Naive thymus-derived CD4-positive, alpha-beta T cell (primary cell): ENCODE measurements at regions of chr6 and their contacts with region 1.

Region 1: DNA sequence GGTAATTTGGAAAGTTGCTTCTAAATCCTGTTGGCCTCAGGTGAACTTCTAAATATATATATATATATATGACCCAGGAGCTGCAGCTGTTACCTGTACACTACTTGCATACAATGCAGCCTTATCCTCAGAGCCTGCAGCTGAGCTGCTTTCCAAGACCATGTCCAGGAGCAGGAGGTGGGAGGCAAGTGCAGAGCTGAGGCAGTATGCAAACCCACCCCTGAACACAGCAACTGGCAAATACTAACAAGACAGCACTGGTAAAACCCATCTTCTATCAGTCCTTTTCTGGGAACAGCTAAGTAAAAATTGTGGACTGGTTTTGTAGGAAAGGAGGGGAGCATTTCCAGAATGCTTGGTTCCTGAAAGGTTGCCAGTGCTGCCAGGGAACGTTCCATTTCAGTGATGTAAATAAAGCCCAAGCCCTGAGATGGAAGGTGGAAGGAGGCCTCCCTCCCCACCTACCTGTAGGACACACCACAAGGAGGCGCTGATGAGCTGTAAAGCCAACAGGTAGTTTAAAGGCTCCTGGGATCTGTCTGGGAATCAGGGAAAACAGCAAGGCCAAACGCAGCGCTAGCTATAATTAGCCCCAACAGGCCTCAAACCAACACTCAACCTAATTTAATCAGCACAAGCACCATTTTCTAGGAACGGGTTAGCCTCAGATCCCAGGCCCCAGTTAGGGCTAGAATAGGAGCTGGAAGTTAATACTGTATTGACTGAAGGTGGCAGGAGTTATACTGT is 93.8 kb upstream of the MAP7 start:
- DNase-seq: peak; percentile 47 to 77 (median 69)
- ATAC-seq: peak; percentile 84
- H3K4me3 ChIP-seq: no peak overlapping the region
- H3K4me3 Mint-ChIP-seq: no peak overlapping the region
- H3K27ac ChIP-seq: no peak overlapping the region
- H3K27ac Mint-ChIP-seq: peak overlapping the region in 3 of 9 donors; percentile 10 to 53 (median 31)
- H3K4me1 ChIP-seq: peaks cover 0 to 13% of the 10 kb centered on the region in 2 donors
- H3K4me1 Mint-ChIP-seq: peaks cover 0 to 8% (median 0%) of the 10 kb centered on the region in 7 donors
- H3K27me3 ChIP-seq: no peaks in the 10 kb centered on the region
- H3K27me3 Mint-ChIP-seq: no peaks in the 10 kb centered on the region

Region 2: GRCh38 chr6:136607932-136608772 is 35.9 kb before region 1 on chr6:
- CTCF ChIA-PET with region 1: interaction called, 5 read pairs
- POLR2A ChIA-PET with region 1: no interaction called
- intact Hi-C with region 1: loop called (anchors 1 to 5 kb)
- DNase-seq: peak; percentile 47 to 77 (median 69)
- ATAC-seq: peak; percentile 90
- H3K4me3 ChIP-seq: no peak overlapping the region
- H3K4me3 Mint-ChIP-seq: no peak overlapping the region
- H3K27ac ChIP-seq: no peak overlapping the region
- H3K27ac Mint-ChIP-seq: peak overlapping the region in 3 of 9 donors; percentile 11 to 53 (median 46)
- H3K4me1 ChIP-seq: no peaks in the 10 kb centered on the region
- H3K4me1 Mint-ChIP-seq: peaks cover 0 to 23% (median 5%) of the 10 kb centered on the region in 7 donors
- H3K27me3 ChIP-seq: no peaks in the 10 kb centered on the region
- H3K27me3 Mint-ChIP-seq: no peaks in the 10 kb centered on the region

Region 3: GRCh38 chr6:136719280-136720044 is 75.4 kb after region 1 on chr6:
- CTCF ChIA-PET with region 1: interaction called, 14 read pairs
- POLR2A ChIA-PET with region 1: no interaction called
- intact Hi-C with region 1: no loop called
- DNase-seq: no peak
- ATAC-seq: peak; percentile 10
- H3K4me3 ChIP-seq: no peak overlapping the region
- H3K4me3 Mint-ChIP-seq: peak overlapping the region in 1 of 10 donors; percentile 55
- H3K27ac ChIP-seq: no peak overlapping the region
- H3K27ac Mint-ChIP-seq: peak overlapping the region in 1 of 9 donors; percentile 43
- H3K4me1 ChIP-seq: peaks cover 0 to 18% of the 10 kb centered on the region in 2 donors
- H3K4me1 Mint-ChIP-seq: peaks cover 11 to 61% (median 33%) of the 10 kb centered on the region in 7 donors
- H3K27me3 ChIP-seq: no peaks in the 10 kb centered on the region
- H3K27me3 Mint-ChIP-seq: no peaks in the 10 kb centered on the region

Region 4: GRCh38 chr6:136751522-136751956 is 107.5 kb after region 1 on chr6:
- CTCF ChIA-PET with region 1: interaction called, 3 read pairs
- POLR2A ChIA-PET with region 1: no interaction called
- intact Hi-C with region 1: loop called in 1 of 2 experiments (anchors 1 kb)
- DNase-seq: peak in 7 of 9 donors; percentile 28 to 78 (median 68)
- ATAC-seq: peak; percentile 71
- H3K4me3 ChIP-seq: peak overlapping the region; percentile 37
- H3K4me3 Mint-ChIP-seq: peak overlapping the region; percentile 22 to 87 (median 72)
- H3K27ac ChIP-seq: peak overlapping the region; percentile 60
- H3K27ac Mint-ChIP-seq: peak overlapping the region; percentile 78 to 98 (median 91)
- H3K4me1 ChIP-seq: peaks cover 37 to 51% of the 10 kb centered on the region in 2 donors
- H3K4me1 Mint-ChIP-seq: peaks cover 58 to 84% (median 65%) of the 10 kb centered on the region in 7 donors
- H3K27me3 ChIP-seq: no peaks in the 10 kb centered on the region
- H3K27me3 Mint-ChIP-seq: no peaks in the 10 kb centered on the region

Region 5: DNA sequence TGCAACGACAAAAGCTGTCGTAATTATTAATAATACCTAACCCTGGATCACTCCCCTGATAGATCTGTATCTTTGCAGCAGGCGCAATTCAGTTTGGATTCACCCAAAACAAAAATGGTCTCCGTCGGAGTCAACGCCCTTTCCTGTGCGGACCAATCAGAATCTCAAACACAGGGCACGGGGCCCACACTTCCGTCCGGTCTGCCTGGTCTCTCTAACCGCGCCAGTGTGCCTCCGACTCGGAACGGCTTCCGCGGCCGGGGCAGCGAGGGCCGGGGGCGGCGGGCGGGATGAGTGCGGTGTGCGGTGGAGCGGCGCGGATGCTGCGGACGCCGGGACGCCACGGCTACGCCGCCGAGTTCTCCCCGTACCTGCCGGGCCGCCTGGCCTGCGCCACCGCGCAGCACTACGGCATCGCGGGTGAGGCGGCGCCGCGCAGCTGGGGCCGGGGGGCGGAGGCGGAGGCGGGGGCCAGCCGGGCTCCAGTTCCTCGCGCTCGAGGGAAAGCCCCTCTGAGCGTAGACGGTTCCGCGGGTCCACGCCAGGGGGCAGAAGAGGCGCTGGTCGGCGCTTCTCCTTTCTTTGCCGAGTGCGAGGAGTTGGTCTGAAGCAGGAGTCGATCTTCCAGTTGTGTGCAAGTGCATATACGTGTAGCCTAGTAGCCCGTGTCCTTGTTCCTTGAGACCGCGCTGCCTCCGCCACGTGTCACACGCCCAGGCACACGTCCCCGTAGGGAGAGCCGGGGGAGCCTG is 178.5 kb after region 1 on chr6 and contains the start of gene PEX7:
- CTCF ChIA-PET with region 1: interaction called, 3 read pairs
- POLR2A ChIA-PET with region 1: interaction called, 5 read pairs
- intact Hi-C with region 1: loop called (anchors 1 kb)
- DNase-seq: peak; percentile 83 to 94 (median 92)
- ATAC-seq: peak; percentile 95
- H3K4me3 ChIP-seq: peak within 1 kb of the TSS; percentile 96
- H3K4me3 Mint-ChIP-seq: peak within 1 kb of the TSS; percentile 87 to 99 (median 94)
- H3K27ac ChIP-seq: peak within 1 kb of the TSS; percentile 91
- H3K27ac Mint-ChIP-seq: peak within 1 kb of the TSS; percentile 91 to 99 (median 96)
- H3K4me1 ChIP-seq: peaks cover 6 to 13% of the 10 kb centered on the region in 2 donors
- H3K4me1 Mint-ChIP-seq: peaks cover 13 to 50% (median 40%) of the 10 kb centered on the region in 7 donors
- H3K27me3 ChIP-seq: peaks cover 0 to 3% of the 10 kb centered on the region in 2 donors
- H3K27me3 Mint-ChIP-seq: peaks cover 3 to 10% (median 8%) of the 10 kb centered on the region in 5 donors
- total RNA-seq, gene PEX7: 4.0 to 6.2 (median 5.4) TPM

Region 6: DNA sequence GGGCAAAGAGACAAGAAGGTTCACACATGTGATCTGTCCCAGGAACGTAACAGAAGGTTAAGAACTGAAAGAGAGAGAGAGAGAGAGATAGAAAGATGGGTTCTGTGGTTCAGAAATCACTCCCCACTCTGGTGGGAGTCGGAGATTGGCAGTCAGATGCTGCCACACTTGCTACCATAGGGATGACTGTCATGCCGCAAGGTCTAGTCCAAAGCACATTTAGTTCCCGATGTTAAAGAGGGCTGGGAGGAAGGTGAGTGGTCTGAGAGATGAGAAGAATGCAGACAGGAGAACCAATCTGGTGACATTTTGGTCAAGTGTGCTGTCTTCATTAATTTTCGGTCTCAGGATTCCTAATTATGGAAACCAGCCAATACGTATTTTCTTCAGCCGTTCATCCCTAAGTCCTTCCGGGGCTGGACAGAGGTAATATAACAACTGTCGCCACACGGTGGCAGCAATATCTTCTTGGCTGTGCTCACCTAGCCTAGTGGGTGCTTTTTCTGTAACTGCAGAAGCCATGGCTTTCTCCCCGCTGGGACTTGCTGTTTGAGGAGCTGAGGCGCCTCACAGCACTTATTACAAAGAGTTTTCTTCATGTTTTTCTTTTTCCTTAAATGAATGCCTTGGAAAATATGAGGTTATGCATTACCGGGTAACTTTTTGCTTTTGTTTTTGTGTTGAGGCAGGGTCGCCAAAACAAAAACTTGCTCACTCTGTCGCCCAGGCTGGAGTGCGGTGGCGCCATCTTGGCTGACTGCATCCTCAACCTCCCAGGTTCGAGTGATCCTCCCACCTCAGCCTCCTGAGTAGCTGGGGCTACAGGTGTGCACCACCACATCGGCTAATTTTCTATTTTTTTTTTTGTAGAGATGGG is 324.1 kb after region 1 on chr6:
- CTCF ChIA-PET with region 1: no interaction called
- POLR2A ChIA-PET with region 1: no interaction called
- intact Hi-C with region 1: loop called in 1 of 2 experiments (anchors 1 kb)
- DNase-seq: peak in 8 of 9 donors; percentile 7 to 48 (median 30)
- ATAC-seq: peak; percentile 87
- H3K4me3 ChIP-seq: no peak overlapping the region
- H3K4me3 Mint-ChIP-seq: no peak overlapping the region
- H3K27ac ChIP-seq: no peak overlapping the region
- H3K27ac Mint-ChIP-seq: no peak overlapping the region
- H3K4me1 ChIP-seq: no peaks in the 10 kb centered on the region
- H3K4me1 Mint-ChIP-seq: peaks cover 0 to 9% (median 0%) of the 10 kb centered on the region in 7 donors
- H3K27me3 ChIP-seq: no peaks in the 10 kb centered on the region
- H3K27me3 Mint-ChIP-seq: peaks cover 29 to 59% (median 47%) of the 10 kb centered on the region in 5 donors